ENCODE measurements at regions of chr9 and their contacts with region 1.

Region 1: GRCh38 chr9:15763371-15763770 is 210.5 kb downstream of the CCDC171 start:
- DNase-seq: no peak
- ATAC-seq: no peak
- H3K4me3 ChIP-seq: no peak overlapping the region
- H3K27ac ChIP-seq: no peak overlapping the region
- H3K4me1 ChIP-seq: no peaks in the 10 kb centered on the region
- H3K27me3 ChIP-seq: no peaks in the 10 kb centered on the region
- CTCF ChIP-seq: no peak
- POLR2A ChIP-seq: no peak

Region 2: DNA sequence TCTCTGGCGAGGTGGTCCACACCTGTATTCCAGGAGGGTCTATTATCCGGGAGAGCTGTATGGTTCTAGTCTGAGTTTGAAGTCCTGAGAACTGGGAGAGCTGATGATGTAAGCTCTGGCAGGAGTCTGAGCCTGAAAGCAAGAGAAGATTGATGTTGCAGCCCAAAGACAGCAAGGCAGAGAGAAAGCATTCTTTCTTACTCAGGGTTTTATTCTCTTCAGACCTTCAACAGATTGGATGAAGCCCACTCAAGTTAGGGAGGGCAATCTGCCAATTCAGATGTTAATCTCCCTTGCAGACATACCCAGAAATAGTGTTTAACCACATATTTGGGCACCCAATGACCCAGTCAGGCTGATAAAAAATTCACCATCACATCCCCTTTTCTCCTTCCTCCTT is 51.4 kb before region 1 on chr9:
- intact Hi-C with region 1: loop called in 1 of 10 experiments (anchors 10 kb)
- DNase-seq: no peak
- ATAC-seq: no peak
- H3K4me3 ChIP-seq: no peak overlapping the region
- H3K27ac ChIP-seq: no peak overlapping the region
- H3K4me1 ChIP-seq: no peaks in the 10 kb centered on the region
- H3K27me3 ChIP-seq: no peaks in the 10 kb centered on the region
- CTCF ChIP-seq: no peak
- POLR2A ChIP-seq: no peak

Region 3: DNA sequence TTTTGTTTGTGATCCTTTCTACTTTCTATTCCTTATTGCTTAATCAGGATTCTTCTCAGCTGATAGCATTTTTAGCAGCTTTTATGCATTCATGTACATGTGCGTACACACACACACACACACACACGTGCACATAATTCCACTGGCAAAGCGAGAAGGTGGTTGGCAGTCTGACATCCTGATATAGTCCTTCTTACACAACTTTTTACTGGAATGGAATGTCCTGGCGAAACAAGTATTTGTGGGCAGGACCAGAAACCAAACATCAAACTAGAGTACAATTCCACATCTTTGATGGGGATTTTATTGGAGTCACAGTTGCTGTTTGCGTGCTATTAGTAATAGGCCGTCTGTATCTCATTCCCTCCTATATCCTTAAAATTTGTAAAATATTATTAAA is 145.9 kb after region 1 on chr9:
- intact Hi-C with region 1: no loop called
- DNase-seq: no peak
- ATAC-seq: peak in 1 of 4 donors; percentile 33
- H3K4me3 ChIP-seq: no peak overlapping the region
- H3K27ac ChIP-seq: no peak overlapping the region
- H3K4me1 ChIP-seq: no peaks in the 10 kb centered on the region
- H3K27me3 ChIP-seq: no peaks in the 10 kb centered on the region
- CTCF ChIP-seq: no peak
- POLR2A ChIP-seq: no peak